Motor neuron (in vitro differentiated cells): ENCODE measurements at regions of chr22 and their contacts with region 1.

Region 1: DNA sequence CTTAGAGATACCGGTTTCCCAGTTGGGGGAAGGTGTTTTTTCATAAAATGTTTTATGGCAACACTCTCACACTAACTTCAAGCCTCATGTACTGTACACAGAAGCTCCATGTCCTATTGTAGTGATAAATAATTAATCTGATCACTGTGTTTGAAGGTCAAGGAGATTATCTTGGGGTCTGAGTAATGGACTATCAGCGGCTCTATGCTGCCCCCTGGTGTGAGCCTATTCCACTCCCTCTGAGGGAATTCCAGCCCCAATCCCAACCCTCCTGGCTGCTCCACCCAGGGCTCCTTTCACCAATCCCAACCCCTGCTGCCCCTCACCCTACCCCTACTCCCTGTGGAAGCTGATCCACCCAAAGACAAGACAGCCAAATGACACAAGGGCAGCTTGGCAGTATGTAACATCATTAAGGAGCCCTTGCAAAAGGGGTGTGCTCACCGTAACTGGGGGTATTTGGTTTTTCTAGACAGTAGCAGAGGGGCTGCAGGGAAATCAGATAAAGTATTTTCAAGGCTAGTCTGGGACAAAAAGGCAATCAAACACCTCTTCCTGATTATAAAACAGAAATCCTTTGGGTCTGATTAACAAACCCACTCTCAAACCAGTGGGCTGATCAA is 22.3 kb downstream of the HPS4 start:
- ATAC-seq: peak; percentile 62 to 96 (median 70)
- H3K4me3 ChIP-seq: no peak overlapping the region
- H3K27ac ChIP-seq: peak overlapping the region in 1 of 2 donors; percentile 60
- H3K4me1 ChIP-seq: peaks cover 30 to 34% of the 10 kb centered on the region in 2 donors

Region 2: GRCh38 chr22:26364066-26365015 is 97.0 kb before region 1 on chr22:
- in situ Hi-C with region 1: loop called in 3 of 9 experiments (anchors 25 kb)
- ATAC-seq: peak; percentile 87 to 92 (median 90)
- H3K4me3 ChIP-seq: no peak overlapping the region
- H3K27ac ChIP-seq: no peak overlapping the region
- H3K4me1 ChIP-seq: peaks cover 4 to 5% of the 10 kb centered on the region in 2 donors